ENCODE measurements at regions of chr20 and their contacts with region 1.

Region 1: GRCh38 chr20:45771182-45771759 is 20.4 kb downstream of the WFDC3 start:
- DNase-seq: peak; percentile 83
- H3K4me3 Mint-ChIP-seq: no peak overlapping the region
- H3K27ac Mint-ChIP-seq: no peak overlapping the region
- H3K4me1 Mint-ChIP-seq: no peaks in the 10 kb centered on the region
- H3K27me3 Mint-ChIP-seq: peaks cover 11% of the 10 kb centered on the region
- CTCF ChIP-seq: peak; percentile 83

Region 2: GRCh38 chr20:45311589-45312211 is 459.6 kb before region 1 on chr20:
- CTCF ChIA-PET with region 1: interaction called, 17 read pairs
- POLR2A ChIA-PET with region 1: no interaction called
- intact Hi-C with region 1: no loop called
- DNase-seq: peak; percentile 55
- H3K4me3 Mint-ChIP-seq: no peak overlapping the region
- H3K27ac Mint-ChIP-seq: no peak overlapping the region
- H3K4me1 Mint-ChIP-seq: no peaks in the 10 kb centered on the region
- H3K27me3 Mint-ChIP-seq: no peaks in the 10 kb centered on the region
- CTCF ChIP-seq: peak; percentile 80

Region 3: DNA sequence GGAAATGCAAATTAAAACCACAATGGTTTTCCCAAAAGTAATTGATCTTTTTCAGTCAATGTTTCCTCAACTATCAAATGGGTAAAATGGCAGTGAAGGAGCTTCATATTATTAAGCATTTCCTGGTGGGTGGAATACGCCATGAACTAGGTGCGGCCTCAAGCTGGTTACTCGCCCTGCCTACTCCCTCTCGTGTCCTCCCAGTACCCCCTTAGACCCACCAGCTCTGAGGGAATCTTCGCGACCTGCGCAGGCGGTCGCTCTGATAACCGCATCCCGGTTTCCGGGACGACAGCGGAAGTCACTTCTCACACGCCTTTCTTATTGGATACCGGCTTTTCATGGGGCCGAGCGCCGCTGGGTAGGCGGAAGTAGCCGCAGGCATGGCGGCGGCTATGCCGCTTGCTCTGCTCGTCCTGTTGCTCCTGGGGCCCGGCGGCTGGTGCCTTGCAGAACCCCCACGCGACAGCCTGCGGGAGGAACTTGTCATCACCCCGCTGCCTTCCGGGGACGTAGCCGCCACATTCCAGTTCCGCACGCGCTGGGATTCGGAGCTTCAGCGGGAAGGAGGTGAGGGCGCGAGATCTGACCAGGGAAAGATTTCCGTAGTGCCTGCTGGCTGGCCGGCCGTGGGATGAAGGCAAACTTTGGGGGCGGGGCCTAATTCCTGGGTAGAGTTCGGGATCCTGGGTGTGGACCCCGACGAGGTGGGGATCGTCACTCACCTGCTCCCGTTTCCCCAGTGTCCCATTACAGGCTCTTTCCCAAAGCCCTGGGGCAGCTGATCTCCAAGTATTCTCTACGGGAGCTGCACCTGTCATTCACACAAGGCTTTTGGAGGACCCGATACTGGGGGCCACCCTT is 355.3 kb before region 1 on chr20 and contains the start of gene PIGT:
- CTCF ChIA-PET with region 1: interaction called, 10 read pairs
- POLR2A ChIA-PET with region 1: interaction called, 9 read pairs
- intact Hi-C with region 1: no loop called
- DNase-seq: peak; percentile 81
- H3K4me3 Mint-ChIP-seq: peak within 1 kb of the TSS; percentile 90
- H3K27ac Mint-ChIP-seq: peak within 1 kb of the TSS; percentile 93
- H3K4me1 Mint-ChIP-seq: peaks cover 24% of the 10 kb centered on the region
- H3K27me3 Mint-ChIP-seq: no peaks in the 10 kb centered on the region
- CTCF ChIP-seq: no peak
- total RNA-seq, gene PIGT: 79.4 and 84.3 TPM in 2 replicates

Region 4: GRCh38 chr20:45456632-45457031 is 314.6 kb before region 1 on chr20:
- CTCF ChIA-PET with region 1: interaction called, 18 read pairs
- POLR2A ChIA-PET with region 1: no interaction called
- intact Hi-C with region 1: loop called (anchors 2 kb)
- DNase-seq: peak; percentile 49
- H3K4me3 Mint-ChIP-seq: no peak overlapping the region
- H3K27ac Mint-ChIP-seq: no peak overlapping the region
- H3K4me1 Mint-ChIP-seq: no peaks in the 10 kb centered on the region
- H3K27me3 Mint-ChIP-seq: no peaks in the 10 kb centered on the region
- CTCF ChIP-seq: no peak

Region 5: DNA sequence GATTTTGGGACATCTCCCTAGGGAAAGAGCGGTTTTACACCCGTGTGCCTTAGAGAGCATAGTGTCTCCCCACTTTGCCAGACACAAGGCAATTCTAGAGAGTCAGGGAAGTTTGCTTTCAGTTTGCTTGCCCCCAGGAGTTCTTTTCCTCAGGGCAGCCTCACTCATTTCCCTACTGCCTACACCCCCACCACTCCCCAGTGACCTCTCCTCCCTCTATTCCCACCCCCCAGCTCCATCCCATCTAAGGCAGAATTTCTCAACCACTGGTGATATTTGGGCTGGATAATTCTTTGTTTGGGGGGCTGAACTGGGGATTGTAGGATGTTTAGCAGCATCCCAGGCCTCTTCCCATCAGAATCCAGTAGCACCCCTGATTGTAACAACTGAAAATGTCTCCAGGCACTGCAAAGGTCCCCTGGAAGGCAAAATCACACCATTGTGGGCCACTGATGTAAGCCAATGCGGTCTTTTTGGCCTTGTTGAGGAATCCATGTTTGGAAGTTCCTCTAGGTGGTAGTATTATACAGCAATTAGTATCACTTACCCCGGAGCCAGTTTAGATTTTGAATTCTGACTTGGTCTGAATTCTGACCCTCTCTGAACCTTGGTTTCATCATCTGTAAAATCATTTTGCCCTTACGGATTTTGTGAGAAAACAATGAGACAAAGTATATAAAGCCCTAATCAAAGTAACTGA is 225.4 kb before region 1 on chr20:
- CTCF ChIA-PET with region 1: interaction called, 58 read pairs
- POLR2A ChIA-PET with region 1: interaction called, 10 read pairs
- intact Hi-C with region 1: loop called (anchors 1 kb)
- DNase-seq: peak; percentile 39
- H3K4me3 Mint-ChIP-seq: no peak overlapping the region
- H3K27ac Mint-ChIP-seq: no peak overlapping the region
- H3K4me1 Mint-ChIP-seq: peaks cover 5% of the 10 kb centered on the region
- H3K27me3 Mint-ChIP-seq: peaks cover 73% of the 10 kb centered on the region
- CTCF ChIP-seq: peak; percentile 45

Region 6: DNA sequence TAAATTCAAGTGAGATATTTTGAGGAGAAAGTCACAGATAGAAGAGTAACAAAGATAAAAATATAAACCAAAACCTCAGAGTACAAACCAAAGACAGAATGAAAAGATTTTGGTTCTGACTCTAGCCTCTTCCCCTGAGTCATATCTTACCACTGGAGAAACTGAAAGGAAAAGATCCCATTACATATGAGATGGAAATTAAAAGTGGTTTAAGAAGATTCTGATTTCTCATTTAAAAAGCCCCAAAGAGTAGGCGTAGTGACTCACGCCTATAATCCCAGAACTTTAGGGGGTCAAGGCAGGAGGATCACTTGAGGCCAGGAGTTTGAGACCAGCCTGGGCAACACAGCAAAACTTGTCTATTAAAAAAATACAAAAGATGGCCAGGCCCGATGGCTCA is 18.5 kb before region 1 on chr20:
- CTCF ChIA-PET with region 1: interaction called, 18 read pairs
- POLR2A ChIA-PET with region 1: interaction called, 3 read pairs
- intact Hi-C with region 1: no loop called
- DNase-seq: no peak
- H3K4me3 Mint-ChIP-seq: no peak overlapping the region
- H3K27ac Mint-ChIP-seq: no peak overlapping the region
- H3K4me1 Mint-ChIP-seq: no peaks in the 10 kb centered on the region
- H3K27me3 Mint-ChIP-seq: peaks cover 32% of the 10 kb centered on the region
- CTCF ChIP-seq: no peak

Measured in MCF 10A (cell line).